Panc1 (cell line): ENCODE measurements at regions of chr1 and their contacts with region 1.

Region 1: GRCh38 chr1:12019858-12020509 is 686 bp downstream of the MIIP start:
- DNase-seq: no peak
- ATAC-seq: peak; percentile 17
- H3K4me3 ChIP-seq: peak overlapping the region; percentile 77 to 80
- H3K27ac ChIP-seq: peak overlapping the region; percentile 79
- H3K4me1 ChIP-seq: no peaks in the 10 kb centered on the region
- H3K27me3 ChIP-seq: no peaks in the 10 kb centered on the region
- CTCF ChIP-seq: no peak

Region 2: DNA sequence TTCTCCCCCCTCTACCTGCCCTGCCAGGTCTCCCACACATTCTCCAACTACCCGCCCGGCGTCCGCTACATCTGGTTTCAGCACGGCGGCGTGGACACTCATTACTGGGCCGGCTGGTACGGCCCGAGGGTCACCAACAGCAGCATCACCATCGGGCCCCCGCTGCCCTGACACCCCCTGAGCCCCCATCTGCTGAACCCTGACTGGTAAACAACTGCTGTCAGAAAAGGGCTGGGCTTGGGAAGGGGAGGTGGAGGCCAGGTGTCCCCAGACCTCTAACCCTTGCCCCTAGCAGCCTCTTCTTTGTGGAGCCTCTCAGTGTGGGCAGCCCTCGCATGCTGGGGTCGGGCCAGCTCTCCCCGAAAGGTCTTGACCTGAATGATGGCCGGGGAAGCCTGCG is 358.9 kb before region 1 on chr1:
- CTCF ChIA-PET with region 1: interaction called, 13 read pairs
- POLR2A ChIA-PET with region 1: no interaction called
- in situ Hi-C with region 1: no loop called
- intact Hi-C with region 1: no loop called
- DNase-seq: no peak
- ATAC-seq: no peak
- H3K4me3 ChIP-seq: no peak overlapping the region
- H3K27ac ChIP-seq: no peak overlapping the region
- H3K4me1 ChIP-seq: no peaks in the 10 kb centered on the region; the same call in 1 of the 2 replicates
- H3K27me3 ChIP-seq: no peaks in the 10 kb centered on the region
- CTCF ChIP-seq: no peak